Calu3 (cell line): ENCODE measurements at regions of chr6 and their contacts with region 1.

Region 1: GRCh38 chr6:146990821-146991798 is 213.1 kb upstream of the STXBP5 start:
- DNase-seq: no peak
- H3K4me3 Mint-ChIP-seq: no peak overlapping the region
- H3K27ac Mint-ChIP-seq: no peak overlapping the region
- H3K4me1 Mint-ChIP-seq: no peaks in the 10 kb centered on the region
- H3K27me3 Mint-ChIP-seq: no peaks in the 10 kb centered on the region
- CTCF ChIP-seq: no peak

Region 2: GRCh38 chr6:147126618-147127022 is 135.5 kb after region 1 on chr6:
- CTCF ChIA-PET with region 1: no interaction called
- intact Hi-C with region 1: no loop called
- DNase-seq: no peak
- H3K4me3 Mint-ChIP-seq: no peak overlapping the region
- H3K27ac Mint-ChIP-seq: no peak overlapping the region
- H3K4me1 Mint-ChIP-seq: no peaks in the 10 kb centered on the region
- H3K27me3 Mint-ChIP-seq: no peaks in the 10 kb centered on the region
- CTCF ChIP-seq: no peak

Region 3: GRCh38 chr6:147434516-147434915 is 443.4 kb after region 1 on chr6:
- CTCF ChIA-PET with region 1: interaction called, 10 read pairs
- intact Hi-C with region 1: no loop called
- DNase-seq: no peak
- H3K4me3 Mint-ChIP-seq: no peak overlapping the region
- H3K27ac Mint-ChIP-seq: no peak overlapping the region
- H3K4me1 Mint-ChIP-seq: no peaks in the 10 kb centered on the region
- H3K27me3 Mint-ChIP-seq: no peaks in the 10 kb centered on the region
- CTCF ChIP-seq: no peak